Activated CD8-positive, alpha-beta T cell treated with anti-CD3 and anti-CD28 coated beads for 36 hours (primary cell): ENCODE measurements at regions of chr11 and their contacts with region 1.

Region 1: DNA sequence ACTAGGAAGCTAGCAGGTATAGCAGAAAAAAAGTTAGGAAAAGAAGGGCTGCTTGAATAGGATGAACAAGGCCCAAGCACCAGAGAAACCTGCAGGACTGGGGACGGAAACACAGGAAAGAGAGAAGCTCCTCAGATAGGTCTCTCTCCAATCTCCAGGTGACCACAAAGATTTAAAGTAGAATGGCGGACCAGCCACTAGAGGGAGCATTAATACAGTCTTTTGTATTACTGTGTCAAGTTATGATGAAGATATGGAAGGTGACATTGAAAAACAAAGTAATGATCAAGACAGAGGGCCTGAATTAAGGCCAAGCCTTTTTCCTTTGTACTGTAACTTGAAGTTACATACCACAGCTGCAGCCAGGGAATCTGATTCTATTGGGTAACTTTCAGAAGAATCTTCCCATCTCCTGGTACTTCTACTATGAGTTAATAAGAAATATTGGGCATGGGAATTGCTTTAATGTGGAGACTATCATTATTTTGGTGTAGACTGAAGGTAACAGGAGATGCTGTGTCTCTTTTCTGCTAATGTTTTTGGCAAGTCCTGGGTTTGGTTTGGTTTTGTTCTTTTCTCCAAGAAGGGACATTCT is 33.8 kb downstream of the OR2AG2 start:
- DNase-seq: peak; percentile 86
- ATAC-seq: peak; percentile 57
- H3K4me3 Mint-ChIP-seq: no peak overlapping the region
- H3K27ac Mint-ChIP-seq: peak overlapping the region; percentile 78
- H3K4me1 Mint-ChIP-seq: peaks cover 84% of the 10 kb centered on the region
- H3K27me3 Mint-ChIP-seq: no peaks in the 10 kb centered on the region
- CTCF ChIP-seq: peak; percentile 72

Region 2: GRCh38 chr11:6693342-6694228 is 44.4 kb before region 1 on chr11:
- CTCF ChIA-PET with region 1: interaction called, 14 read pairs
- POLR2A ChIA-PET with region 1: no interaction called
- intact Hi-C with region 1: no loop called
- DNase-seq: peak; percentile 82
- ATAC-seq: peak; percentile 81
- H3K4me3 Mint-ChIP-seq: no peak overlapping the region
- H3K27ac Mint-ChIP-seq: peak overlapping the region; percentile 46
- H3K4me1 Mint-ChIP-seq: peaks cover 31% of the 10 kb centered on the region
- H3K27me3 Mint-ChIP-seq: no peaks in the 10 kb centered on the region
- CTCF ChIP-seq: no peak

Region 3: GRCh38 chr11:6719576-6719975 is 18.4 kb before region 1 on chr11:
- CTCF ChIA-PET with region 1: interaction called, 28 read pairs
- POLR2A ChIA-PET with region 1: no interaction called
- intact Hi-C with region 1: no loop called
- DNase-seq: no peak
- ATAC-seq: no peak
- H3K4me3 Mint-ChIP-seq: no peak overlapping the region
- H3K27ac Mint-ChIP-seq: peak overlapping the region; percentile 65
- H3K4me1 Mint-ChIP-seq: peaks cover 77% of the 10 kb centered on the region
- H3K27me3 Mint-ChIP-seq: no peaks in the 10 kb centered on the region
- CTCF ChIP-seq: no peak